ENCODE measurements at regions of chr6 and their contacts with region 1.

Region 1: DNA sequence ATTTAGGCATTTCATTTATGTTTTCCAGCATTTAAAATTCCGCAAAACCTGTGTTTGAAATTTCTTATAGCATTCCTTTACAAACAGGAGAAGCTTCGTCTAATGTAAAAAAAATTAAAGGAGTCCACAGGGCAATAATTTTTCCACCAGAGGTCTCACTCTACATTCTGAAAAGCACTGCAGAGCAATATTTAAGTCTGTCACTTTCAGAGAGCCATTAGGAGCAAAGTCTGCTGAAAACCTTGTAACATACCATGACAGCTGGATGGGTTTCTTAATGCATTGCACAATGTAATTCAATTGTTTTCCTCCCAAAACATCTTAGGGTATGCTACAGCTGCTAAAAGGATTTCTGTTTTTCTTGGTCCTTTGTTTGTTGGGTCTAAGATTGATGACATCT is 18.0 kb downstream of the BAG2 start:
- ATAC-seq: peak in 2 of 8 experiments; percentile 40 to 51
- H3K4me3 ChIP-seq: no peak overlapping the region
- H3K27ac ChIP-seq: no peak overlapping the region
- H3K4me1 ChIP-seq: no peaks in the 10 kb centered on the region

Region 2: DNA sequence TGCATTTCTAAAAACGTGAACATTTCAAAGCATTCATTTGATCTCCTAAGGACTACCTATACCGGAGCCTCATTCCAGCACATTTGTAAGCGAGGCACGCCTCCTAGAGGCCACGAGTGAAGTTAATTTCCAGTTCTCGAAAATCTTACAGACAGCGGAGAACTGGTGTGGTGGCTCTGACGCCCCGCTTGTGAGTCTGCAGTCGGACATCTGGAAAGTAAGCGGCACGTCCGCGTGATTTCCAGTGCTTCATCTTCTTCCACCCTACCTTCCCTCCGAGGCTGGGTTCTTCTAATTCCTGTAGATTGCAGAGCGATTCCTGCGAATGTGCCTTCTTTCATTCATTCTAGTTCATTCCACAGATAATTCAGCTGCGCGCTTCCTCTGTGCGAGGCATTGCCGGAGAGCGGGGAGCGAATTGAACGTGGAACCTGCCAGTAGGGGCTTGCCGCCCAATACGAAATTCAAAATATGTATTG is 126.5 kb after region 1 on chr6:
- in situ Hi-C with region 1: loop called in 1 of 9 experiments (anchors 25 kb)
- ATAC-seq: peak; percentile 51 to 94 (median 92)
- H3K4me3 ChIP-seq: peak overlapping the region; percentile 55 to 86 (median 65)
- H3K27ac ChIP-seq: no peak overlapping the region
- H3K4me1 ChIP-seq: peaks cover 4% of the 10 kb centered on the region in 2 donors